Activated CD4-positive, alpha-beta memory T cell treated with anti-CD3 and anti-CD28 coated beads for 36 hours (primary cell): ENCODE measurements at regions of chr14 and their contacts with region 1.

Region 1: GRCh38 chr14:106766145-106766544 is 1239.8 kb downstream of the TMEM121 start:
- DNase-seq: no peak
- H3K4me3 Mint-ChIP-seq: no peak overlapping the region
- H3K27ac Mint-ChIP-seq: no peak overlapping the region
- H3K4me1 Mint-ChIP-seq: peaks cover 43% of the 10 kb centered on the region
- H3K27me3 Mint-ChIP-seq: no peaks in the 10 kb centered on the region

Region 2: GRCh38 chr14:106069804-106070625 is 696.1 kb before region 1 on chr14:
- CTCF ChIA-PET with region 1: interaction called, 5 read pairs
- POLR2A ChIA-PET with region 1: no interaction called
- intact Hi-C with region 1: loop called (anchors 10 kb)
- DNase-seq: peak; percentile 28
- H3K4me3 Mint-ChIP-seq: peak overlapping the region; percentile 1
- H3K27ac Mint-ChIP-seq: peak overlapping the region; percentile 70
- H3K4me1 Mint-ChIP-seq: peaks cover 30% of the 10 kb centered on the region
- H3K27me3 Mint-ChIP-seq: peaks cover 46% of the 10 kb centered on the region